ENCODE measurements at regions of chr4 and their contacts with region 1.

Region 1: GRCh38 chr4:142933207-142933606 is 87.1 kb upstream of the INPP4B start:
- DNase-seq: no peak
- H3K4me3 ChIP-seq: no peak overlapping the region
- H3K27ac ChIP-seq: no peak overlapping the region
- H3K4me1 ChIP-seq: no peaks in the 10 kb centered on the region
- H3K27me3 ChIP-seq: no peaks in the 10 kb centered on the region
- CTCF ChIP-seq: no peak

Region 2: GRCh38 chr4:142875117-142875516 is 58.1 kb before region 1 on chr4:
- CTCF ChIA-PET with region 1: no interaction called
- POLR2A ChIA-PET with region 1: no interaction called
- intact Hi-C with region 1: loop called (anchors 1 kb)
- DNase-seq: no peak
- H3K4me3 ChIP-seq: no peak overlapping the region
- H3K27ac ChIP-seq: no peak overlapping the region
- H3K4me1 ChIP-seq: no peaks in the 10 kb centered on the region
- H3K27me3 ChIP-seq: no peaks in the 10 kb centered on the region
- CTCF ChIP-seq: no peak

Region 3: DNA sequence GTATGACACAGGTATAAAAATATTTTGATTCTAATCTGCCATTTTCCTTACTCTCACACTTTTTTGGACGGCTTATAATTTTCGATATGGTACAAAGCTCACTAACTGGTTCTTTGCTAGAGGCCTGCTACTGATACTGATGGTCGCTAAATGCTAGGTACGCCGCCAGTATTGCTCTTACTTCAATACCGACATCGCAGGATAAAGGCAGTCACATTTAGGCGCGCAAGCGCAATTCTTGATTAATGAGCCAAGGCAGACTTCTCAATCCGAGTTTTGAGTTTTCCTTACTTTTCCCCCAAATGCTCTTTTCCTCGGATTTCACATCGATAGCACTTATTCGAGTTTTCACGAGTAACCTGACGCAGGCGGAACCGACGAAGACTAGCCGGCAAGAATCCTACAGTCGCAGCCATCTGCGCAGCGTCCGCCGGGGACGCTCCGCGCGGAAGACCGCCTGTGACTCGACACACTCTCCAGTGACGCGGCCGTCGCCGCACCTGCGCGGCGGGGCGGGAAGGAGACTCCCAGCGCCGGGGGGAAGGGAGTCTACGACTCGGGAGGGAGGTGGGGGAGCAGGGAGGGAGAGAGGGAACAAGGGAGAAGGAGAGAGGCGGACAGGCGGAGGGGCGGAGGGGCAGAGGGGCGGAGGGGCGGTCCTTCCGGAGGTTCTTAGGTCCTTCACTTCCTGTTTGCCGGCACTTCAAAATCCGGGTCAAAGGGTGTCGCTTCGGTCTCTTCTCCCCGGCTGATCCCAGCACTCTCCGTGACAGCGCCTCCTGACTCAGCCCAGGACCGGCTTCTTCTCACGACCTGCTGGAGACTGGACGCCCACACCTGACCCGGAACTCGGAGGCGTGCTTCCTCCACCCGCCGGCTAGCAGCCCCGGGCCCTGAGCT is 251.3 kb after region 1 on chr4 and contains the start of gene USP38:
- CTCF ChIA-PET with region 1: no interaction called
- POLR2A ChIA-PET with region 1: no interaction called
- intact Hi-C with region 1: no loop called
- DNase-seq: peak; percentile 88 to 89
- H3K4me3 ChIP-seq: peak within 1 kb of the TSS; percentile 92
- H3K27ac ChIP-seq: peak within 1 kb of the TSS; percentile 89
- H3K4me1 ChIP-seq: peaks cover 32% of the 10 kb centered on the region
- H3K27me3 ChIP-seq: no peaks in the 10 kb centered on the region
- CTCF ChIP-seq: no peak
- total RNA-seq, gene USP38: 11.9 and 12.3 TPM in 2 replicates

Measured in PC-9 (cell line).